ENCODE measurements at regions of chr20 and their contacts with region 1.

Region 1: DNA sequence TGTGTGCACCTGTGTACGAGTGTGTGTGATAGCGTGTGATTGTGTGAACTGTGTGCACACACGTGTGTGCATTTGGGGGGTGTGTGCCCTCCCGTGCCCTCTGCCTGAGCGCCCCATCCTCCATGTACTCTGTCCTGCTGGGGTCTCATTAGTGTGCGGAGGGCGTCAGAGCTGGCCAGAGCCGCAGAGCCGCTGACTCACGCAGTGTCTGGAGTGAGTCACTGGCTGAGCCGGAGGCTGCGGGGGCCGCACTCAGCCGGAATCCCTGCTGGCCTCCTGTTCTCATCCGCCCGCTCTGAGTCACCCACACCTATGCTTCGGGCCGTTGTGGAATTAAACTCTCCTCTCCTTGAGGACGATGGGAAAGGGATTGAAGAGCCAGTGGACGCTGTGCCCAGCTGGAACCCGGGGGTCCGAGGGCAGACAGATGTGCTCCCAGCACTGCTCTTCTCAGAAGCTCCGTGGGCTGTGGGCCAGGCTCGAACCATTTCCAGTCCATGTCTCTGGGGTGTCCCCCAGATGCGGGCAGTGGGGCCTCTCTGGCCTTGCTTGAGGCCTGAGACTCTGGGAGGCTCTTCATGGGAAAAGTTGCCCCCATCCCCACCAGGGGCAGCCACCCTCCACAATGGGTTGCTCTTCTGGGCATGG is 27.1 kb upstream of the STX16 start:
- DNase-seq: peak; percentile 93
- H3K4me3 ChIP-seq: no peak overlapping the region
- H3K27ac ChIP-seq: peak overlapping the region; percentile 76
- H3K4me1 ChIP-seq: peaks cover 29% of the 10 kb centered on the region
- H3K27me3 ChIP-seq: no peaks in the 10 kb centered on the region
- CTCF ChIP-seq: no peak
- POLR2A ChIP-seq: peak; percentile 48

Region 2: DNA sequence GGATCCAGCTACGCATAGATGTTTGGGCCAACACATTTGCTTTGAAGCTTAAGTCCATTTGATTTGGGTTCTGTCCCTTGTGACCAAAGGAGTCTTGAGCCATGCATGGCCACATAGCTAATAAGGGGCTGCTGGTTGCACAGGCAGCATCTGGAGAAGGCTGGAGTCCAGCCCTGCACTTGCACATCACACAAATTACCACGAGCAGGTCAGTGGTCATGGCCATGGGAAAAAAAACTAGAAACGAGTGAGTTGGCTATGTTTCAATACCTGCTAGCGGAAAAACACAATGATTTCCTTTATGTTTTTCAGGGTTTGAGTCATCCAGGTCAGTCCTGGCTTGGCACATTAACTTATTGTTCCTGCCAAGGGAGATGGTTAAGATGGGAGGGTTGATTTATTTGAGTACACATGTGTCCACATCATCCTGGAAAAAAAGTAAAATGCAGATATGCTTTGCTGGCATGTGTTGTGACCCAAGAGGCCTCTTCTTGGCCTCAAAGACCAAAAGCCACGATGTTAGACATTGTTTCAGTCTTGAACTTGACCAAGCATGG is 21.5 kb after region 1 on chr20:
- CTCF ChIA-PET with region 1: interaction called, 7 read pairs
- POLR2A ChIA-PET with region 1: no interaction called
- dilution Hi-C with region 1: no loop called
- intact Hi-C with region 1: loop called (anchors 1 kb)
- DNase-seq: peak; percentile 95
- H3K4me3 ChIP-seq: no peak overlapping the region
- H3K27ac ChIP-seq: no peak overlapping the region
- H3K4me1 ChIP-seq: peaks cover 17% of the 10 kb centered on the region
- H3K27me3 ChIP-seq: peaks cover 2 to 5% of the 10 kb centered on the region in 2 experiments
- CTCF ChIP-seq: no peak
- POLR2A ChIP-seq: no peak

Region 3: GRCh38 chr20:58839474-58839874 is 215.5 kb after region 1 on chr20:
- CTCF ChIA-PET with region 1: no interaction called
- POLR2A ChIA-PET with region 1: no interaction called
- dilution Hi-C with region 1: loop called (anchors 25 kb)
- intact Hi-C with region 1: no loop called
- DNase-seq: peak; percentile 21
- H3K4me3 ChIP-seq: no peak overlapping the region
- H3K27ac ChIP-seq: no peak overlapping the region
- H3K4me1 ChIP-seq: no peaks in the 10 kb centered on the region
- H3K27me3 ChIP-seq: peaks cover 34 to 52% of the 10 kb centered on the region in 2 experiments
- CTCF ChIP-seq: peak; percentile 7 to 48
- POLR2A ChIP-seq: no peak

Measured in endothelial cell of umbilical vein (primary cell).